Activated naive CD4-positive, alpha-beta T cell treated with anti-CD3 and anti-CD28 coated beads, Interleukin-2, amount 10 ng/mL, durations not matched to agents 7 days and 5 days (primary cell): ENCODE measurements at regions of chr15 and their contacts with region 1.

Region 1: DNA sequence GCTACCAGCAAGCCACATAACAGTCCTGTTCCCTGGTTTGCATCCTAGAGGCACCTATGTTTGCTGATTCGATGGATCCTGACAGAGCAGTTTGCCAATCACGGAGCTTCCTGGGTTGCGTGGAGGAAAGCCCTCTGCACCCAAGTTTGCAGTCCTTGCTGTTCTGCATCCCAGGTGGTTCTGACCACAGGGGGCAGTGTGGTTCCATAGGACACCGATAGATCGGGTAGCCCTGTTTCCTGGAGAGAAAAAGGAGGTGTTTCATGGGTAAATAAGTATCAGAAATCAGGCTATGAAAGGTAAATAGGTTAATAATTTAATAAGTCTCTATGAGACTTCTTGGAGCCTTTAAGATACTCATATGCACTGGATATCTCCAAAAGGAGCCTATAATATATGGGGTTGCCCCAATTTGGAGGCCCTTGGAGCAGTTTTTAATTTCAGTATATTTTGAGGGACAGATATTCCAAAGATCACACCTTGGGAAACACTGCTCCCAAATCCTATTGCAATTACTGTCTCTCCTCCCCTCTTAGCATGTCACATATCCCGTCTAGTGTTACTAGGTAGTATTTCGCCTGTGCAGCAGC is 194.6 kb upstream of the TPM1 start:
- DNase-seq: peak; percentile 63
- H3K4me3 Mint-ChIP-seq: no peak overlapping the region
- H3K27ac Mint-ChIP-seq: no peak overlapping the region
- H3K4me1 Mint-ChIP-seq: no peaks in the 10 kb centered on the region
- H3K27me3 Mint-ChIP-seq: peaks cover 26% of the 10 kb centered on the region

Region 2: DNA sequence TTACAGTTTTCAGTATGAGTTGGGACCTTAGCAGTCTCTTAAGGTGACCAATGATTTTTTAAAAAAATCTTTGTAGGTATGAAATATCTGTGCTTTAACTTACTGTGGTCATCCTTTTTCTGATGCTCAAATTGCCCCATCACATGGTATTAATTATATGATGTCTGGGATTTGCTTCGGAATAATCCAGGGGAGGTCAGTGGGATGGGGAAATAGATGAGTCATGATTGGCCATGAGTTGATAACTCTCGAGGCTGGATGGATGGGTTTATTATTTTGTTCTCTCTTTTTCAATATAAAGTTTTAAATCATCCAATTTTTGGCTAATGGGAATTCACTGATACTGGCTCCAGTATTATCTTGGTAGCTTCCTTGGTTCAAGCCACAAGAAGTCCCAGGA is 175.7 kb before region 1 on chr15:
- CTCF ChIA-PET with region 1: no interaction called
- DNase-seq: no peak
- H3K4me3 Mint-ChIP-seq: no peak overlapping the region
- H3K27ac Mint-ChIP-seq: no peak overlapping the region
- H3K4me1 Mint-ChIP-seq: no peaks in the 10 kb centered on the region
- H3K27me3 Mint-ChIP-seq: no peaks in the 10 kb centered on the region

Region 3: GRCh38 chr15:62985768-62986167 is 137.8 kb after region 1 on chr15:
- CTCF ChIA-PET with region 1: no interaction called
- DNase-seq: no peak
- H3K4me3 Mint-ChIP-seq: no peak overlapping the region
- H3K27ac Mint-ChIP-seq: no peak overlapping the region
- H3K4me1 Mint-ChIP-seq: no peaks in the 10 kb centered on the region
- H3K27me3 Mint-ChIP-seq: peaks cover 17% of the 10 kb centered on the region

Region 4: DNA sequence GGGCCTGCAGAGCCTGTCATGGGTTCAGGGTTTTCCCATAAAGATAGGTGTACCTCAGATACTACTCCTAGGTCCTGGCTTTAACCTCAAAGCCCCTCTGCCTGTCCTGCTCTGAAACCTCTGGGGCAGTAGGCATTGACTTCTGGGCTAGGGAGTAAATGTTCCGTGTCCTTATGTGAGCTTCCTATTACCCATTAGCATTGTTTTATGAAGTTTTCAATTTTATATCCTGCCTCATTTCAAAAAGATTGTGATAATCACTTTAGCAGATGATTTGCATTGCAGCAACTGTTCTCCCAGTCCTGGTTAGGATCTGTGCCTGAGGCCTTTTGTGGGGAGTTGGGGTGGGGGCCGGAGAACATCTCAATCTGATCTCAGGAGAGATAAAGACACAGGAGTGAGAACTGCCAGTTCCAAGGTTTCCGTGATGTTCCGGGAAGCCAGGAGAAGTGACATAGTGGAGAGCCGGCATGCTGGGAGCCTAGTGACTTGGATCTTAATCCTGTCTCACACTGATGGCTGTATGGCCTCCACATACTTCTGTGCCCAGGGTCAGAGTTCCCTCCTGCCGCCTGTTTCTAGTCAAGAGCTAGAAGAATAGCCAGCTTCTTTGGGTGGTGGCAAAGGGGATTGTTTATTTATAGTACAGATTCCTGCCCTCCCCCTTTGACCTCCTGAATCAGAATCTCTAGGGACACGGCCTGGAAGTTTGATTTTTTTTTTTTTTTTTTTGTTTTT is 205.1 kb after region 1 on chr15:
- CTCF ChIA-PET with region 1: no interaction called
- DNase-seq: no peak
- H3K4me3 Mint-ChIP-seq: no peak overlapping the region
- H3K27ac Mint-ChIP-seq: no peak overlapping the region
- H3K4me1 Mint-ChIP-seq: peaks cover 15% of the 10 kb centered on the region
- H3K27me3 Mint-ChIP-seq: peaks cover 5% of the 10 kb centered on the region

Region 5: DNA sequence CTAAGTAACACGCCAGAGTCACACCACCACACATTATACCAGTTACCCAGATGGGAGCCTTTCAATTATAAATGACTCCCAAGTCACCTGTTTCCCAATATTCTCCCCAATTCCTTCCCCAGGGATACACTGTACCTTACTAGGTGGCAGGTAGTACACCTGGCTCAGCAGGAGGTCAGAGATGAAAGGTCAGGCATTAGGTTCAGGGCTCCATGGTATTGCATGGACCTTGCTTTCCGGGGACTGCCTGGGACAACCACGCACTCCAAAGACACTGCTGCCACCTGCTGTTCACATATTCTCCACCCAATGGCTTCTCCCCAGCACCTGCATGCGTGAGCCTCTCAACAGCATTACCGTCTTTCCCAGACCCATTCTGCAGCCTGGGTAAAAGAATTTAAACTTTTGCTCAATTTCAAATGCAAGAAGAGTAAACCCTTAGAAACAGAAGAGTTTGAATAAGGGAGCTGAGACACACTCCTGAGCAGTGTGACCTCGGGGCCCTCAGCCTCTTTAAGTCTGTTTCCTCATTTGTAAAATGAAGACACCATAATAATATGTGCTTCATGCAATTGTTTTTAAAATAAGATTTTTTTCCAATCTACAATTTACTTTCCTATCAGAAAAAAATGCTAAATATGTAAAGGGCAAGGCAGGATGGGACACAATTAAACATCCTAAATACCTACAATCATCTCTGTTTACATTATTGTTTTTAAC is 245.7 kb after region 1 on chr15:
- CTCF ChIA-PET with region 1: interaction called, 16 read pairs
- DNase-seq: peak; percentile 85
- H3K4me3 Mint-ChIP-seq: no peak overlapping the region
- H3K27ac Mint-ChIP-seq: no peak overlapping the region
- H3K4me1 Mint-ChIP-seq: peaks cover 4% of the 10 kb centered on the region
- H3K27me3 Mint-ChIP-seq: peaks cover 14% of the 10 kb centered on the region